Panc1 (cell line): ENCODE measurements at regions of chr9 and their contacts with region 1.

Region 1: GRCh38 chr9:26033336-26033735 is 355.1 kb upstream of the TUSC1 start:
- DNase-seq: no peak
- ATAC-seq: no peak
- H3K4me3 ChIP-seq: no peak overlapping the region
- H3K27ac ChIP-seq: no peak overlapping the region
- H3K4me1 ChIP-seq: no peaks in the 10 kb centered on the region
- H3K27me3 ChIP-seq: no peaks in the 10 kb centered on the region
- CTCF ChIP-seq: no peak

Region 2: GRCh38 chr9:25224996-25225395 is 808.3 kb before region 1 on chr9:
- CTCF ChIA-PET with region 1: interaction called, 10 read pairs
- POLR2A ChIA-PET with region 1: no interaction called
- in situ Hi-C with region 1: no loop called
- intact Hi-C with region 1: no loop called
- DNase-seq: no peak
- ATAC-seq: no peak
- H3K4me3 ChIP-seq: no peak overlapping the region
- H3K27ac ChIP-seq: no peak overlapping the region
- H3K4me1 ChIP-seq: no peaks in the 10 kb centered on the region
- H3K27me3 ChIP-seq: no peaks in the 10 kb centered on the region
- CTCF ChIP-seq: no peak